Left colon (tissue), 2 donors: ENCODE measurements at regions of chr12 and their contacts with region 1.

Region 1: DNA sequence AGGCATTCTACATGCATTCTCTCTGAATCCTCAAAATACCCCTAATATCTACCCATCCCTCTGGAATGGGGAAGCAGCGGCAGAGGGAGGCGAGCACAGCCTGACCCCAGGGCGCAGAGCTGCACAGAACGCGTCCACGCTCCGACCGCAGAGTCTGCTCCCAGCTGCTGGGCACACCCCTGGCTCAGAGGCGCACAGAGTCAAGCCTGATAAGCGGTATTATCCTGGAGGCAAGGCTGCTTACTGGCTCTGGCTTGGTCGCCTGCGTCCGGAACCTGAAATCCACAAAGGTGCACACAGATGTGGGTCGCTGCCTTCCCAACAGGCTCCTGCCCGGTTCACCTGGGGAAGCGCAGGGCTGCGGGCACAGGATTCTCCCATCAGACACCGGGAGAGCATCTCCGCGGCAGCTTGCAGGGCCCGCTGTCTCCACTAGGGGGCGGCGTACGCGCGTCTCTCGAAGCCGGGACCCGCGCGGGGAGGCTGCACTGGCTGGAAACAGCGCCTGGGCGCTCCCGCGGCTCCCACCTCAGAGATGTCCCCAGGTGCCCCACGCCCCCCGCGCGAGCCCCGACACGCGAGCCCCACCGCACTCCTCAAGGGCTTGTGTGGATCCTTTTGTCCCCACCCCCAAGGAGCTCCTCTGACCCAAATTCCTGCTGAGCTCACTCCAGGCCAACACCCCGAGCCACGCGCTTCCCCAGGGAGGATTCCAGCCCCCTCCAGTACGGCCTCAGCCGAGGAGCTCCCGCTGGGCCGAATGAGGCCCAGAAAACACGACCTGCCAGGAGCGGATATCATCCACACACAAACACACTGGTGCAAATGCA is 120.1 kb upstream of the FZD10 start:
- DNase-seq: peak in 1 of 2 donors; percentile 20
- ATAC-seq: no peak

Region 2: GRCh38 chr12:130097798-130098291 is 55.6 kb after region 1 on chr12:
- intact Hi-C with region 1: no loop called
- DNase-seq: no peak
- ATAC-seq: no peak

Region 3: DNA sequence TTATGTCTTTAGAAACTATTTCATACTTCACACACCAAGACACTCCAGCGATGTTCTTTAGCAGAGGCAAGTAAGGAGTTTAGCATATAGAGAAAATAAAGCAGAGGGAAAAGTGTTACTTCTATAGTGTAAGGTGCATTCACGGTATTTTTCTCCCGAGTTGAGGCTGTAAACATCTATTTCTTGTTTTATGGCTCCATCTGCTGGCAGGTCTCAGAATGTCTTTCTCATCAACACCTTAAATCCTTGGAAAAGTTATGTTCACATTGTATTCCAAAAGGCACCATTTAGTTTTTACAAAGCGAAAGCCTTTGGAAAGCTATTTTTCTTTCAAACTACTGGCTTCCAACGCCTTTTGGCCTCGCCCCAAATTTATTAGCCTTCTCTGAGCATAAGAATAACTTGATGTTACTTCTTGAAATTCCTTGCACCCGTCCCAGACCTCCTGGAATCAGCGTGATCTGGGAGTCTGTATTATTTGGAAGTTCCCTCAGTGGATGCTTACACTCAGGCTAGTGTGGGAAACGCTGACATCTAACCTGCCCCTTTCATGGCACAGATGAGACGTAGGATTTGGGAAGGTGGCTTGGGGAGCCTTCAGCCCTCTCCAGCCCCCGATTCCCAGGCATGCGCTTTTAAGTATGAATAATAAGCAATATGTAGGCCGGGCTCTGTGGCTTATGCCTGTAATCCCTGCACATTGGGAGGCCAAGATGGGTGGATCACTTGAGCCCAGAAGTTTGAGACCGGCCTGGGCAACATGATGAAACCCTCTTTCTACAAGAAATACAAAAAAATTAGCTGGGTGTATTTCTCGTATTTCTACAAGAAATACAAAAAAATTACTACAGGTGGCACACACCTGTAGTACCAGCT is 293.6 kb after region 1 on chr12:
- intact Hi-C with region 1: loop called (anchors 5 to 10 kb)
- DNase-seq: peak in 1 of 2 donors; percentile 45
- ATAC-seq: peak; percentile 56